Activated CD8-positive, alpha-beta T cell treated with anti-CD3 and anti-CD28 coated beads for 36 hours (primary cell): ENCODE measurements at regions of chr11 and their contacts with region 1.

Region 1: GRCh38 chr11:66592457-66593302 is at the starts of genes CCDC87 and CCS:
- DNase-seq: peak; percentile 99
- ATAC-seq: peak; percentile 98
- H3K4me3 Mint-ChIP-seq: peak within 1 kb of the TSS; percentile 99
- H3K27ac Mint-ChIP-seq: peak within 1 kb of the TSS; percentile 97
- H3K4me1 Mint-ChIP-seq: peaks cover 24% of the 10 kb centered on the region
- H3K27me3 Mint-ChIP-seq: no peaks in the 10 kb centered on the region
- CTCF ChIP-seq: peak; percentile 75
- total RNA-seq, gene CCDC87: 0.14 to 0.27 TPM
- total RNA-seq, gene CCS: 22.0 to 25.6 TPM

Region 2: GRCh38 chr11:66539170-66539869 is 53.4 kb before region 1 on chr11:
- CTCF ChIA-PET with region 1: no interaction called
- POLR2A ChIA-PET with region 1: no interaction called
- intact Hi-C with region 1: no loop called
- DNase-seq: no peak
- ATAC-seq: no peak
- H3K4me3 Mint-ChIP-seq: no peak overlapping the region
- H3K27ac Mint-ChIP-seq: no peak overlapping the region
- H3K4me1 Mint-ChIP-seq: peaks cover 12% of the 10 kb centered on the region
- H3K27me3 Mint-ChIP-seq: no peaks in the 10 kb centered on the region
- CTCF ChIP-seq: no peak

Region 3: GRCh38 chr11:66568124-66568916 is 24.4 kb before region 1 on chr11 and contains the start of gene CTSF:
- CTCF ChIA-PET with region 1: interaction called, 16 read pairs
- POLR2A ChIA-PET with region 1: interaction called, 5 read pairs
- intact Hi-C with region 1: no loop called
- DNase-seq: peak; percentile 73
- ATAC-seq: peak; percentile 92
- H3K4me3 Mint-ChIP-seq: peak within 1 kb of the TSS; percentile 70
- H3K27ac Mint-ChIP-seq: no peak within 1 kb of the TSS
- H3K4me1 Mint-ChIP-seq: peaks cover 2% of the 10 kb centered on the region
- H3K27me3 Mint-ChIP-seq: no peaks in the 10 kb centered on the region
- CTCF ChIP-seq: no peak
- total RNA-seq, gene CTSF: 0.68 to 1.3 TPM

Region 4: DNA sequence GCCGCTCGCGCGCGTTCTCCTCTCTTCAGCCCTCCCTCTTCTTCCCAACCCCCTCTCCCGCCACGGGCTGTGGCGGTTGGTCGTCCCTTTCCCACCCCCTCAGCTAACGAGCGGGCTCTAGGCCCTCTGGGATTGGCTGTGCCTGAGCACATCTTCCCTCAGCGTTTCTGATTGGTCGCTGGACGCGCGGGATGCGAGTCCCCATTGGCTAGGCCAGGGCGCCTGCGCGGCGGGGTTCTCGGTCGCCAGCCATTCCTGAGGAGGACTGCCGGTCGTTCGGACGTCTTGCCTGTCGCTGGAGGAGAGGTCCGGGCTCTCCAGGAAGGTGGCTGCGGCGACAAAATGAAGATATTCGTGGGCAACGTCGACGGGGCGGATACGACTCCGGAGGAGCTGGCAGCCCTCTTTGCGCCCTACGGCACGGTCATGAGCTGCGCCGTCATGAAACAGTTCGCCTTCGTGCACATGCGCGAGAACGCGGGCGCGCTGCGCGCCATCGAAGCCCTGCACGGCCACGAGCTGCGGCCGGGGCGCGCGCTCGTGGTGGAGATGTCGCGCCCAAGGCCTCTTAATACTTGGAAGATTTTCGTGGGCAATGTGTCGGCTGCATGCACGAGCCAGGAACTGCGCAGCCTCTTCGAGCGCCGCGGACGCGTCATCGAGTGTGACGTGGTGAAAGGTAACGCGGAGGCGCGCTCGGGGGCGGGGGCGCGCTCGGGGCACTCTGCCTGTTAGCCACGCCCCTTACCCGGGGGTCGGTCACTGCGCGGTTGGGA is 23.9 kb after region 1 on chr11 and contains the start of gene RBM14:
- CTCF ChIA-PET with region 1: interaction called, 3 read pairs
- POLR2A ChIA-PET with region 1: interaction called, 14 read pairs
- intact Hi-C with region 1: no loop called
- DNase-seq: peak; percentile 99
- ATAC-seq: peak; percentile 96
- H3K4me3 Mint-ChIP-seq: peak within 1 kb of the TSS; percentile 93
- H3K27ac Mint-ChIP-seq: peak within 1 kb of the TSS; percentile 98
- H3K4me1 Mint-ChIP-seq: peaks cover 33% of the 10 kb centered on the region
- H3K27me3 Mint-ChIP-seq: no peaks in the 10 kb centered on the region
- CTCF ChIP-seq: no peak
- total RNA-seq, gene RBM14: 153 to 159 TPM